ENCODE measurements at regions of chr1 and their contacts with region 1.

Region 1: GRCh38 chr1:183915625-183916510 is 110.9 kb downstream of the RGL1 start:
- DNase-seq: peak; percentile 78 to 88 (median 81)
- H3K4me3 ChIP-seq: no peak overlapping the region
- H3K4me3 Mint-ChIP-seq: peak overlapping the region in 2 of 8 donors; percentile 48 to 68
- H3K27ac ChIP-seq: no peak overlapping the region
- H3K27ac Mint-ChIP-seq: peak overlapping the region in 6 of 7 donors; percentile 41 to 84 (median 54)
- H3K4me1 ChIP-seq: peaks cover 5% of the 10 kb centered on the region
- H3K4me1 Mint-ChIP-seq: peaks cover 8 to 12% (median 10%) of the 10 kb centered on the region in 4 donors
- H3K27me3 ChIP-seq: no peaks in the 10 kb centered on the region
- H3K27me3 Mint-ChIP-seq: no peaks in the 10 kb centered on the region

Region 2: DNA sequence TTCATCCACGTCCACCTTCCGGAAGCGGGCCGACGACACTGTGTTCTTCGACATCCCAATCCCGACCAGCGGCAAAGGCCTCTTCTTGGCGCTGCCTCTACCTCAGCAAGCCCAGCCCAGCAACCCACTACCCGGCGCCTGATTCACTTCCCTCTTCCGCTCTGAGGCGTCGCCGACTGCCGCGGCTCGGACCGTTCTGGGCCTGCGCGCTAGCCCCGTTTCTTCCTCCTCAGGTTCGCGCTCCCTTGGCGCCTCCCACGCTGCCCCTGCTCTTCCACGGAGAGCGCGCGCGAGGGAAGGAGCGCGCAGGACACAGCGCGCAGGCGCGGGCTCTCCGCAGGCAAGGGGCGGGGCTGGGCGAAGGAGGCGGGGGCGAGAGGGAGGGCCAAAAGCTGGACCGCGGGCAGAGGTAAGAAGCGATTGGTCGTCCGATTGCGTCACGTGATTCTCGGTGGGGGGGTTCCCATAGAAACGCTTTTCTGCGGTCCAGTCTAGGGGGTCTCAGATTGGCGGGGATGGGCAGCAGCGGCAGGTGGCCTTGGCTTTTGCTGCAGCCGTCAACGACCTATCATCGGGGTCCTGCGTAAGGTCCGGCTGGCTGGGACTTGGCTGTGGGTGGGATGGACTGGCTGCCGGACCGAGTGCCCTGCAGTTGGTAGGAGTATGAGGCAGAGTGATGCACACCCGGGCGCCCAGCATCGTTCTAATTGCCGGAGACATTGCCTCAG is 280.1 kb before region 1 on chr1 and contains the start of gene ARPC5:
- CTCF ChIA-PET with region 1: interaction called, 4 read pairs
- POLR2A ChIA-PET with region 1: interaction called, 5 read pairs
- intact Hi-C with region 1: loop called (anchors 1 kb)
- DNase-seq: peak; percentile 94 to 95 (median 94)
- H3K4me3 ChIP-seq: peak within 1 kb of the TSS; percentile 72 to 88
- H3K4me3 Mint-ChIP-seq: peak within 1 kb of the TSS; percentile 100
- H3K27ac ChIP-seq: peak within 1 kb of the TSS; percentile 81
- H3K27ac Mint-ChIP-seq: peak within 1 kb of the TSS; percentile 92 to 100 (median 99)
- H3K4me1 ChIP-seq: peaks cover 44% of the 10 kb centered on the region
- H3K4me1 Mint-ChIP-seq: peaks cover 26 to 54% (median 36%) of the 10 kb centered on the region in 4 donors
- H3K27me3 ChIP-seq: no peaks in the 10 kb centered on the region
- H3K27me3 Mint-ChIP-seq: no peaks in the 10 kb centered on the region
- total RNA-seq, gene ARPC5: 106 to 107 TPM

Region 3: GRCh38 chr1:183739741-183740271 is 176.1 kb before region 1 on chr1:
- CTCF ChIA-PET with region 1: interaction called, 14 read pairs
- POLR2A ChIA-PET with region 1: no interaction called
- intact Hi-C with region 1: loop called (anchors 1 kb)
- DNase-seq: no peak
- H3K4me3 ChIP-seq: no peak overlapping the region
- H3K4me3 Mint-ChIP-seq: no peak overlapping the region
- H3K27ac ChIP-seq: no peak overlapping the region
- H3K27ac Mint-ChIP-seq: no peak overlapping the region
- H3K4me1 ChIP-seq: no peaks in the 10 kb centered on the region
- H3K4me1 Mint-ChIP-seq: peaks cover 0 to 2% (median 0%) of the 10 kb centered on the region in 4 donors
- H3K27me3 ChIP-seq: no peaks in the 10 kb centered on the region
- H3K27me3 Mint-ChIP-seq: no peaks in the 10 kb centered on the region

Region 4: DNA sequence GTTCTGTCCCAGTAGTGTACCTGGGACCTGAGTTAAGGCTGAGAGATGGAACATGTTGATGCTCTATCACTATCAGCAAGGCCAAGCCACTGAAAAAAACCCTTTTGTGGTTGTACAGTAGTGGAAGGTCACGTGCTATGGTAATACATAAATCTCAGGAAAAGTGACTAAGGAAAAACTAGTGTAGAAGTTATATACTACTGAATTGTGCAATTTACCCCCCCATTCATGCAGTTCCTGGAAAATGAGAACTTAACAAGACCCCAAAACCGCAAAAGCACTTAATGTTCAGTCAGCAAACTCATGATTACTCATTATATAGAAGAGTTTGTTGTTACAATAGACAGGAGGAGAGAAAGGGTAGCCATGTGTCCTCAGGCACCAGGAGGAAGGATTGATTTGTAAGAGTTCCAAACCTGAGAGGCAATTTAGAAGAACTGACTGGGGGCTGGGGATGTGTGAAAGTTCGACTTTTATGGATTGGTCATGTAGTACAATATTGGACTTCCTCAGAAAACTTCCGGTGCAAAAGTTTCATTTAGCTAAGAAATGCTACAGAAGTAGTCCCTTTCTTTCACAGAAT is 19.3 kb before region 1 on chr1:
- CTCF ChIA-PET with region 1: interaction called, 47 read pairs
- POLR2A ChIA-PET with region 1: no interaction called
- intact Hi-C with region 1: no loop called
- DNase-seq: no peak
- H3K4me3 ChIP-seq: no peak overlapping the region
- H3K4me3 Mint-ChIP-seq: no peak overlapping the region
- H3K27ac ChIP-seq: no peak overlapping the region
- H3K27ac Mint-ChIP-seq: no peak overlapping the region
- H3K4me1 ChIP-seq: no peaks in the 10 kb centered on the region
- H3K4me1 Mint-ChIP-seq: no peaks in the 10 kb centered on the region
- H3K27me3 ChIP-seq: no peaks in the 10 kb centered on the region
- H3K27me3 Mint-ChIP-seq: no peaks in the 10 kb centered on the region

Region 5: DNA sequence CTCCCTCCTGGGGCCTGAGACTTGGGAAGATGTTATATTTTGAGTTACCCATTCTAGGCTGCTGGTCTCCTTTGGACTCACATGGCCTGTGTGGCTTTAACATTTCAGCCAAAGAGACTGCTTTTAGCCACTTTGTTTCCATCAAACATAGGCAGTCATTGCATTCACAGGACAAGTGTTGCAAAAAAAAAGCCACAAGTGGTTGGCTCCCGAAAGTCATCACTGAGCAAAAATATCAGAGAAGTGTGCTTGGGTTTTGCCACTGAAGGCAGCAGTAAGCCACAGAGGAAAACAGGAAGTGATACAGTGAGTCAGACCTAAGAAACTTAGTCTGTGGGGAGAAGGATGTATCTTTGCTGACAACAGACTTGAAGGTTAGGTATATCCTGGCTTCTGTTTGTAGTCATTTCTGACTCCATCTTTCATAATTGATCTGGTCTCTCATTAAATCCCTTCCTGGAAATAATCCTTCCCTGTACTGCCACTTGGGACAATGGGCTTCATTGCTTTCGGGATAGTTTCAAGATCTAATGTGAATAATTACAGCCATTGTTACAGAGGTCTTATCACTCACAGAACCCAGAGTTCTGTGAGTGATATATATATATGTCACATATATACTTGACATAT is 40.8 kb after region 1 on chr1:
- CTCF ChIA-PET with region 1: interaction called, 23 read pairs
- POLR2A ChIA-PET with region 1: interaction called, 7 read pairs
- intact Hi-C with region 1: loop called (anchors 1 kb)
- DNase-seq: peak; percentile 72 to 78 (median 76)
- H3K4me3 ChIP-seq: no peak overlapping the region
- H3K4me3 Mint-ChIP-seq: peak overlapping the region in 7 of 8 donors; percentile 25 to 75 (median 67)
- H3K27ac ChIP-seq: peak overlapping the region; percentile 53
- H3K27ac Mint-ChIP-seq: no peak overlapping the region
- H3K4me1 ChIP-seq: peaks cover 37% of the 10 kb centered on the region
- H3K4me1 Mint-ChIP-seq: peaks cover 6 to 15% (median 7%) of the 10 kb centered on the region in 4 donors
- H3K27me3 ChIP-seq: no peaks in the 10 kb centered on the region
- H3K27me3 Mint-ChIP-seq: no peaks in the 10 kb centered on the region

Measured in CD4-positive, alpha-beta memory T cell (primary cell).